ENCODE measurements at regions of chr22 and their contacts with region 1.

Region 1: DNA sequence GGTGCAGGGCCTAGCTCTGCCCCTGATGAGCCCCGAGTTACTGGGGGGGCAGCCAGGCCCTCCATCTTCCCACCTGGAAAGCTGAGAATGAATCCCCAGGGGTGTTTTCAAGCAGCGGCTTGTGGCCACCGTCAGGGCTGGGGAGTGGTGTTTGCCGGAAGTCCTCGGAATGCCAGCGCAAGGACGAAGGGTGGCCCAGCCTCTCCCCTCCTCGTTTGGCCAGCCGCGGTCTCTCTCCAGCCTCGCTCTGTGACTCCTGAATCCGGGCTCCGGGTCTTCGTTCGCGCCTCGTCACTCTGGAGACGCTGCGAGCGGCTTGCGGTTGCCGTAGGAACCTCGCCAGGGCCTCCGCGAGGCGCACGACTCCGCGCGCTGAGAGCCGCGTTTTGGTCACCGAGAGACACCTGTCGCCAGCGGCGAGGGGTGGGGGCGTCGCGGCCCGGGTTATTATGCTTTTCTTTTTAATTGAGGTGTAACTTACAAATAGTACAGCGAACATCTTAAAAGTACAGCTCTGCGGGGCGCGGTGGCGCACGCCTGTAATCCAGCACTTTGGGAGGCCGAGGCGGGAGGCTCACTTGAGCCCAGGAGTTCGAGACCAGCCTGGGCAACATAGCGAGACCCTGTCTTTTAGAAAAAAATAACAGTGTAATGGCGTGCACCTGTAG is 6.3 kb upstream of the KDELR3 start:
- DNase-seq: peak; percentile 82
- ATAC-seq: peak; percentile 64

Region 2: GRCh38 chr22:38398609-38399461 is 62.7 kb before region 1 on chr22:
- intact Hi-C with region 1: loop called (anchors 5 kb)
- DNase-seq: peak; percentile 93
- ATAC-seq: peak; percentile 93

Region 3: DNA sequence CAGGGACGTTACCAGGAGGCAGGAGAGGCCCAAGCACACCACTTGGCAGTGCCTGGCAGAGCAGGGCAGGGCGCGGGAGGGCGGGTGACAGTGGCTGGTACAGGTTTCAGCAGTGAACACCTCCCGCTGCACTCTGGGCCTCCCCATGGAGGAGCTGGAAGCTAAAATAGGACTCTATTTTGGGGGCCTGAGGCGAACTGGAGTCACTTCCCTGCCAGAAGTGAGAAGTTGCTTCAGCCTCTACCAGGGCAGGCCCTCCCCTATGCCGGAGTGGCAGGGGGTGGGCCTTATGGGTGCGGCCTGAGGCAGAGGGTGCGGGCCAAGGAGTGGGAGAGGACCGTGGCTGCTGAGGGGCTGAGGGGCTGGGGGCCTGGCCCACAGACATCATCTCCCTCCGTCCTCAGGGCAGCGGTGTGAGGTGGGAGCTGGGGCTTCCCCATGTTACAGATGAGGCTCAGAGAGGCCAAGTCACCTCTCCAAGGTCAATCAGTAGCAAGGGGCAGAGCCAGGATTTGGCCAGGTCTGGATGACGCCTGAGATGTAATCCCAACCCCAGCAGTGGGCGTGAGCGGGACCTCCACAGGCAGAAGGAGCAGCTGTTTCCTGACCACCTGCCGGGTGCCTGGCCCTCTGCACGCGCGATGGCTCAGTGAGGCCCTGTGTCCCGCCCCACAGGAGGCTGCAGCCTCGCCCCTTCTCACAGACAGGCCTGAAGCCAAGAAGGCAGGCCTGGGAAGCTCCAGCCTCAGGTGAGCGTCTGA is 45.8 kb before region 1 on chr22:
- intact Hi-C with region 1: loop called (anchors 5 kb)
- DNase-seq: no peak
- ATAC-seq: peak; percentile 71